Posterior cingulate gyrus (tissue), 11 donors: ENCODE measurements at regions of chr1 and their contacts with region 1.

Region 1: GRCh38 chr1:237864338-237865244 is 26.1 kb downstream of the ZP4 start:
- DNase-seq: peak; percentile 55 to 94 (median 72)

Region 2: DNA sequence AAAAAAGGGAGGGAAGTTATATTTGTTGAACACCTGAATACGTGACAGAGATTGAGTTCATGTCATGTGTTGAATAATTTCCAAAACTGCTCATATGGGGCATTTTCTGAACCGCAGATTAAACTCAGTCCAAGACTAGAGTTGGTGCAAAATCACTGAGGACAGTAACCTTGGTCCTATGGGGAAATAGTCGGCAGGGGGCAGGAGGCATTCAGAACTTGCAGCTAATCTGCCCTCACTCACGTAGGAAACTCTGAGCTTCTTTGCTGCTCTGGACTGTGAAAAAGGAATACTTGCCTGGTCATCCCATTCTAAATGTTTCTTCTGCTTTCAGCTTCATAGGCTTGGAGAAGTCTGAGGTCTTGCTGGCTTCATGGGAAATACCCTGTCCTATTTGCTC is 254.5 kb after region 1 on chr1:
- intact Hi-C with region 1: no loop called
- DNase-seq: no peak

Region 3: GRCh38 chr1:238191170-238191569 is 326.6 kb after region 1 on chr1:
- intact Hi-C with region 1: loop called (anchors 10 kb)
- DNase-seq: no peak

Region 4: GRCh38 chr1:238214449-238214848 is 349.9 kb after region 1 on chr1:
- intact Hi-C with region 1: no loop called
- DNase-seq: no peak

Region 5: DNA sequence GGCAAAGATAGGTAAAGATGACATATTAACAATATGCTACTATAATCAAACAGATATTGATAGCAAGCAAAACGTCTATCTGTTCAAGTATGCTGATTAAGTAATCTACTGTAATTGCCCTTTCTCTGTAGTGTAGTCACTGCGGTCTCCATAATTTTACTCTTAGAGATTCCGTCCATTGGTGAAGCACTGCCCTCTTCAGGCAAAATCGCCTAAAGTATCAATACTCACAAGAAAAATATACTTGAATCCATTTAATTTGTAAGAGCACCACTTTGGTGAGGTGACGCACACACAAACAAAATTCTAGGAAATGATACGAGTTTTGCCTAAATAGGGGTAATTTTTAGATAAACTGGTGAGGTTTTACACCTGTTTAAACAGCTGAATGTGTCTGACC is 1087.2 kb after region 1 on chr1:
- intact Hi-C with region 1: loop called (anchors 5 kb)
- DNase-seq: no peak